Activated T-helper 2 cell treated with anti-CD3 and anti-CD28 coated beads, Interferon-gamma antibody, Interleukin-2, Interleukin-4, amounts not matched to agents 10 μg/mL and 5 μg/mL and 100 μg/mL, durations not matched to agents 14 hours and 24 hours and 36 hours (primary cell): ENCODE measurements at regions of chr20 and their contacts with region 1.

Region 1: DNA sequence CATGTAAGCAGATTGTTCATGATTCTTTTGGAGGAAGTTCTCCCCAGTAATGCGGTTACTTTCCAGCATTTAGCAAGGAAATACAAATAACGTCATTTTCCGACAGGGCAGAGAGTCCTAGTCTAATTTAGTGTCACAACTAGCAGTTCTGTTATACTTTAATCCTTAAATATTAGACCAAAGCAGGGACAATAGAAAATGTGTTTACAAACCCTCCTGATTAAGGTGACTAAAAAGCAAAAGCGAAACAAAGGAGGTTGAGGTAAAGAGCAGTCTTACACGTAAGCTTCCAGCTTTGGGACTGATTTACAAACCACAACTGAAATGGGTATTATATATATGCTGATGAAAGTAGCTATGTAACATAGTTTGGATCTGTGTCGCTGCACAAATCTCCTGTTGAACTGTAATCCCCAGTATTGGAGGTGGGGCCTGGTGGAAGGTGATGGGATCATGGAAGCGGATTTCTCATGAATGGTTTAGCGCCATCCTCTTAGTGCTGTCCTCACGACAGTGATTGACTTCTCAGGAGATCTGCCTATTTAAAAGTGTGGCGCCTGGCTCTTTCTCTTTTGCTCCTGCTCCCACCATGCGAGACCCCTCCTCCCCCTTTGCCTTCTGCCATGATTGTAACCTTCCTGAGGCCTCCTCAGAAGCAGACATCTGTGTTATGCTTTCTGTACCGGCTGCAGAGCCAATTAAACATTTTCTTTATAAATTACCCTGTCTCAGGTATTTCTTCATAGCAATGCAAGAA is 81.9 kb downstream of the PLCB1 start:
- DNase-seq: no peak
- H3K4me3 Mint-ChIP-seq: peak overlapping the region; percentile 74
- H3K27ac Mint-ChIP-seq: peak overlapping the region; percentile 67
- H3K4me1 Mint-ChIP-seq: peaks cover 65% of the 10 kb centered on the region
- H3K27me3 Mint-ChIP-seq: peaks cover 3% of the 10 kb centered on the region

Region 2: GRCh38 chr20:8019246-8019997 is 194.6 kb before region 1 on chr20 and contains the start of gene TMX4:
- intact Hi-C with region 1: loop called (anchors 5 kb)
- DNase-seq: peak; percentile 90
- H3K4me3 Mint-ChIP-seq: peak within 1 kb of the TSS; percentile 85
- H3K27ac Mint-ChIP-seq: peak within 1 kb of the TSS; percentile 73
- H3K4me1 Mint-ChIP-seq: peaks cover 21% of the 10 kb centered on the region
- H3K27me3 Mint-ChIP-seq: peaks cover 5% of the 10 kb centered on the region
- total RNA-seq, gene TMX4: 30.0 and 31.1 TPM in 2 replicates

Region 3: GRCh38 chr20:8156235-8157079 is 57.6 kb before region 1 on chr20:
- intact Hi-C with region 1: loop called (anchors 1 kb)
- DNase-seq: no peak
- H3K4me3 Mint-ChIP-seq: no peak overlapping the region
- H3K27ac Mint-ChIP-seq: no peak overlapping the region
- H3K4me1 Mint-ChIP-seq: peaks cover 24% of the 10 kb centered on the region
- H3K27me3 Mint-ChIP-seq: peaks cover 7% of the 10 kb centered on the region

Region 4: GRCh38 chr20:8166730-8167129 is 47.3 kb before region 1 on chr20:
- intact Hi-C with region 1: no loop called
- DNase-seq: no peak
- H3K4me3 Mint-ChIP-seq: no peak overlapping the region
- H3K27ac Mint-ChIP-seq: no peak overlapping the region
- H3K4me1 Mint-ChIP-seq: peaks cover under 1% of the 10 kb centered on the region
- H3K27me3 Mint-ChIP-seq: peaks cover 4% of the 10 kb centered on the region

Region 5: GRCh38 chr20:8361006-8361652 is 147.1 kb after region 1 on chr20:
- intact Hi-C with region 1: loop called (anchors 5 kb)
- DNase-seq: no peak
- H3K4me3 Mint-ChIP-seq: no peak overlapping the region
- H3K27ac Mint-ChIP-seq: no peak overlapping the region
- H3K4me1 Mint-ChIP-seq: peaks cover 7% of the 10 kb centered on the region
- H3K27me3 Mint-ChIP-seq: peaks cover 39% of the 10 kb centered on the region

Region 6: DNA sequence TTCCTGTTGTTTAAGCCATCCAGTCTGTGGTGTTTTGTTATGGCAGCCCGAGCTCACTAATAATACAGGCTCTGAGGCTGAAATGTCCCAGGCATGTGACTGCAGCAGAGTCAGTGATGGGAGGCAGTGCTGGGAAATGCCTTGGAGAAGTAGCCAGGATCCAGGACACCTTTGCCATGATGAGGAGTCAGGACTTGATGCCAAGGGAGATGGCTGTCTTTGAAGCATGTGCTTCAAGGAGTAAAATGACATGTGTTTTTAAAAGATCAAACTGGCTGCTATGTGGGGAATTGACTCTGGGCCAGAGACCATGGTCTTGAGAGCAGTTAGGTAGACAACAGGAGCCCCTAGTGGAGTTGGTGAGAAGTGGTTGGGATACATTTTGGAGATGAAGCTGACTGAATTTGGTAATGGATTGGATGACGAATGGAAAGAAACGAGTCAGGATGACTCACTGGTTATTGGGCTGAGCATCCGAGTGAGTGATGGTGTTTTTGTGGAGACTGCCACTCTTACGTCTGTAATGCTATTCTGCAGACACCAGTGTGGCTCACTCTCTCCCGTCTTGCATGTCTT is 240.2 kb after region 1 on chr20:
- intact Hi-C with region 1: loop called (anchors 10 kb)
- DNase-seq: no peak
- H3K4me3 Mint-ChIP-seq: no peak overlapping the region
- H3K27ac Mint-ChIP-seq: peak overlapping the region; percentile 6
- H3K4me1 Mint-ChIP-seq: peaks cover 8% of the 10 kb centered on the region
- H3K27me3 Mint-ChIP-seq: no peaks in the 10 kb centered on the region